Activated CD4-positive, alpha-beta T cell treated with anti-CD3 and anti-CD28 coated beads for 36 hours (primary cell): ENCODE measurements at regions of chr22 and their contacts with region 1.

Region 1: DNA sequence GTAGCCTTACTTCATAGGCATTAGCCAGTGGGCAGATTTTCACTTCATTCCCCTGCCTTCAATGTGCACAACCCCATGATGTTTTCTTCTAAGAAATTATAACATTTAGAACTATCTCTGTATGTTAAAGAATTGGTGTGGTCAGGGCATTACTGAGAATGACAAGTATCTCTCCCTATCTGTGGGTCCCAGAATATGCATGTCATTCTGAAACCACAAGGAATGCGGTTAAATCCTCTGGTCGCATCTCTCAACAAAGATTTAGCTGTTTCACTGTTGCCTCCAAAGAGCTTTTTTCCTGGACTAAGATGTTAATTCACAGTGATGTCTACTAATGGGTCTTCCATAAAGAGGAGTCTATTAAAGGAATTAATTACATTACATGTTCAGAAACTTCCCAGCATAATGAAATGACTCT is 62.7 kb downstream of the LIF start:
- DNase-seq: no peak
- ATAC-seq: peak; percentile 57
- H3K4me3 Mint-ChIP-seq: peak overlapping the region; percentile 8
- H3K27ac Mint-ChIP-seq: peak overlapping the region; percentile 84
- H3K4me1 Mint-ChIP-seq: peaks cover 89% of the 10 kb centered on the region
- H3K27me3 Mint-ChIP-seq: no peaks in the 10 kb centered on the region

Region 2: DNA sequence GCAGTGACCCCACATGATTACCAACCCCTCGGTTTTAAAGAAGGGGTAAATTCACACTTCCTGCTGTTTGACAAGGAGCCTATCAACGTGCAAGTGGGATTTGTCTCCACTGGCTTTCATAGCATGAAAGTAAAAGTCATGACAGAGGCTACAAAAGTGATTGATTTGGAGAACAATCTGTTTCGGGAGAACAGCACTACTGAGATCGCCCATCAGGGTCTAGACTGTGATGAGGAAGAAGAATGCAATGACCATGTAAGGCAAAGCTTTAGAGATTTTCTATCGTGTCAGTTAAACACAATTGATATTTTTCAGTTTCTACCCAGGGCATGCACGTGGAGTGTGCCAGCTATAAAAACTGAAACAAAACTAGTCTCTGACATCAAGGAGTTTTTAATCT is 61.9 kb before region 1 on chr22:
- CTCF ChIA-PET with region 1: interaction called, 11 read pairs
- POLR2A ChIA-PET with region 1: no interaction called
- intact Hi-C with region 1: no loop called
- DNase-seq: peak; percentile 26
- ATAC-seq: peak; percentile 89
- H3K4me3 Mint-ChIP-seq: no peak overlapping the region
- H3K27ac Mint-ChIP-seq: no peak overlapping the region
- H3K4me1 Mint-ChIP-seq: peaks cover 19% of the 10 kb centered on the region
- H3K27me3 Mint-ChIP-seq: peaks cover 3% of the 10 kb centered on the region